MCF 10A (cell line): ENCODE measurements at regions of chr5 and their contacts with region 1.

Region 1: DNA sequence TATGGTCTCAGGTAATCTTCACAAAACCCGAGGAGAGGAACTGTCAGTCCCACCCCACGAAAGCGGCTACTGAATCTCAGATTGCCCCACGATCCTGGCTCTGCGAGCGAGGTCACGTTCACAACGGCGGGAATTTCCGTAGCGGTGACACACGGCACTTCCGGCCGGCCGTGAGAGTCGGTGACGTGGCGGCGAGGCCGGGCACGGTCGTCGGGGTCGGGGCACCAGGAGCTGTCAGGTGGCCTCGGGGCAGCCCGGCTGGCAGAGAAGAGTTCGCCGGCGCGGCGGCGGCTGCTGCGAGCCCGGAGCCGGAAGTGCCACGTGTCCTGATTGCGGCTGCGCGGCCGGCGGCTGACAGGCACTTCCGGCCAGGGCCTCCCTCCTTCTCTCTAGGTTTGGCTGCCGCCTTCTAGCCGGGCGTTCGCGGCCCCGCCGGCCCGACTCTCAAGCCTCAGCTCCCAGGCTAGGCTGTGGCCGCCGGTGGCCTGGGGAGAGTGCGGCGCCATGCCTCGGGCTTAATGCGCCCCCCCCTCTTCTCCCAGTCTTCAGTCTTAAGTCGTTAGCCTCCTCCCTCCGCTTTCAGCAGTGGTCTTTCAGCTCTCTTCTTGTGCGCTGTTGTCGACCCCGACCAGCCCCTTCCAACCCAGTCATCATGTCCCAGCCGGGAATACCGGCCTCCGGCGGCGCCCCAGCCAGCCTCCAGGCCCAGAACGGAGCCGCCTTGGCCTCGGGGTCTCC is at the start of gene SEC24A:
- DNase-seq: peak; percentile 95
- H3K4me3 Mint-ChIP-seq: peak within 1 kb of the TSS; percentile 99
- H3K27ac Mint-ChIP-seq: peak within 1 kb of the TSS; percentile 100
- H3K4me1 Mint-ChIP-seq: peaks cover 5% of the 10 kb centered on the region
- H3K27me3 Mint-ChIP-seq: no peaks in the 10 kb centered on the region
- CTCF ChIP-seq: no peak
- total RNA-seq, gene SEC24A: 39.1 and 41.4 TPM in 2 replicates

Region 2: GRCh38 chr5:134626369-134627014 is 22.1 kb before region 1 on chr5:
- CTCF ChIA-PET with region 1: interaction called, 7 read pairs
- POLR2A ChIA-PET with region 1: interaction called, 142 read pairs
- intact Hi-C with region 1: no loop called
- DNase-seq: peak; percentile 84
- H3K4me3 Mint-ChIP-seq: peak overlapping the region; percentile 22
- H3K27ac Mint-ChIP-seq: peak overlapping the region; percentile 53
- H3K4me1 Mint-ChIP-seq: peaks cover 30% of the 10 kb centered on the region
- H3K27me3 Mint-ChIP-seq: no peaks in the 10 kb centered on the region
- CTCF ChIP-seq: no peak

Region 3: GRCh38 chr5:134637161-134637582 is 11.4 kb before region 1 on chr5:
- CTCF ChIA-PET with region 1: interaction called, 8 read pairs
- POLR2A ChIA-PET with region 1: interaction called, 142 read pairs
- intact Hi-C with region 1: loop called (anchors 1 kb)
- DNase-seq: no peak
- H3K4me3 Mint-ChIP-seq: no peak overlapping the region
- H3K27ac Mint-ChIP-seq: no peak overlapping the region
- H3K4me1 Mint-ChIP-seq: no peaks in the 10 kb centered on the region
- H3K27me3 Mint-ChIP-seq: no peaks in the 10 kb centered on the region
- CTCF ChIP-seq: no peak

Region 4: DNA sequence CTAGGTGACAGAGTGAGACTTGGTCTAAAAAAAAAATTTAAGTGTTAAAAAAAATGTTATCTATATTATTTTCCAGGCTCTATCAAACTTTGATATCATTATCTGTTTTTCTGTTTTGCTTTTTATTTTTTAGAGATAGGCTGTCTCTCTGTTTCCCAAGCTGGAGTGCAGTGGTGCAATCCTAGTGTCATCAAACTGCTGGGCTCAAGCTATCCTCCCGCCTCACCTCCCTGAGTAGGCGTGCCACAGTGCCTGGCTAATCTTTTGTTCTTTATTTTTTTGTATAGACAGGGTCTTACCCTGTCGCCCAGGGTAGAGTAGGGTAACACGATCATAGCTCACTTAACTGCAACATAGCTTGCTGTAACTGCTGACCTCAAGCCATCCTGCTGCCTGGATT is 14.4 kb after region 1 on chr5:
- CTCF ChIA-PET with region 1: interaction called, 3 read pairs
- POLR2A ChIA-PET with region 1: interaction called, 12 read pairs
- intact Hi-C with region 1: no loop called
- DNase-seq: no peak
- H3K4me3 Mint-ChIP-seq: no peak overlapping the region
- H3K27ac Mint-ChIP-seq: no peak overlapping the region
- H3K4me1 Mint-ChIP-seq: peaks cover 6% of the 10 kb centered on the region
- H3K27me3 Mint-ChIP-seq: no peaks in the 10 kb centered on the region
- CTCF ChIP-seq: no peak

Region 5: GRCh38 chr5:134758504-134759341 is 110.1 kb after region 1 on chr5 and contains the start of gene DDX46:
- CTCF ChIA-PET with region 1: interaction called, 4 read pairs
- POLR2A ChIA-PET with region 1: interaction called, 10 read pairs
- intact Hi-C with region 1: no loop called
- DNase-seq: peak; percentile 98
- H3K4me3 Mint-ChIP-seq: peak within 1 kb of the TSS; percentile 100
- H3K27ac Mint-ChIP-seq: peak within 1 kb of the TSS; percentile 95
- H3K4me1 Mint-ChIP-seq: peaks cover 19% of the 10 kb centered on the region
- H3K27me3 Mint-ChIP-seq: no peaks in the 10 kb centered on the region
- CTCF ChIP-seq: peak; percentile 91
- total RNA-seq, gene DDX46: 57.7 and 77.0 TPM in 2 replicates